ENCODE measurements at regions of chr9 and their contacts with region 1.

Region 1: GRCh38 chr9:35193762-35194161 is 32.0 kb downstream of the UNC13B start:
- DNase-seq: peak in 2 of 4 experiments; percentile 7 to 29
- ATAC-seq: no peak
- H3K4me3 ChIP-seq: no peak overlapping the region
- H3K27ac ChIP-seq: peak overlapping the region; percentile 48; the same call in 1 of the 3 replicates
- H3K4me1 ChIP-seq: peaks cover 0 to 3% of the 10 kb centered on the region in 2 experiments; a peak in 1 of 5 replicates
- H3K27me3 ChIP-seq: no peaks in the 10 kb centered on the region
- CTCF ChIP-seq: peak; percentile 11 to 50 (median 22); a peak in 3 of 6 replicates
- EP300 ChIP-seq: no peak
- POLR2A ChIP-seq: no peak
- RAD21 ChIP-seq: peak in 1 of 2 experiments; percentile 57; a peak in 2 of 4 replicates

Region 2: DNA sequence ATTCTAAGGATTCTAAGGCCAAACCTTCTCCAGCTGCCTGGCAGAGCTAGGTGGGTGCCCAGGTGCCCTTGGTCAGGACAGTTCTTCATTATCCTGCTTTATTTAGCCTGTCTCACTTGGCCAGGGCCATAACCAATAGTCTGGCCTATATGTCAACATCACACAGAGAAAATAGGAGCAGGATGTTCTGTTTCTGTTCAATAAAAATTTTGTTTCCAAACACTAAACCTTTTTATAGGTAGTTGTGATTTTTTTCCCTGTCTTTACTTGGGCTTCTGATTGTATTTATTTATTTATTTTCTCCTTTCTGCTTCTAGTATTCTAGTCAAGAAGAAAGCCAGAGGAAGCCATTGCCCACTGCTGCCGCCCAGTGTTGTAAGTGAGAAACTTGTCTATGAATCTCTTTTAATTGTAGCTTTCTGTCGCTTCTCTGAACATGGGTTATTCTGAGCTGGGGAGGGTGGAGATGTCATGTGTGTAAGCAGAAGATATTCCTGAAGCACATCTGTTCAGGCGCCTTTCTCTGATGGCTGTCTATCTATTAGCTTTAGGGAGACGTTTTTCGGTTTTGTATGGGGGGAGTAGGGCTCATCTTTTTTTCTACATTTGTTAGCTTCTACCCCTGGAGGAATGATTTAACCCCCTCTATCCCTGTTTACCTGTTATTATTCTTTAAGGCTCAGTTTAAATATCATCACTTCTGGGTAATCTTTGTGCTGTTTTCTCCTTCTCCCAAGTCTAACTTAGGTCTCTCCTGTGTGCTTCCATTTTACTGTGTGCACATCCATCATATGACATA is 65.1 kb after region 1 on chr9:
- CTCF ChIA-PET with region 1: interaction called, 3 read pairs
- POLR2A ChIA-PET with region 1: interaction called, 3 read pairs
- in situ Hi-C with region 1: no loop called
- intact Hi-C with region 1: loop called (anchors 5 kb)
- DNase-seq: peak in 2 of 4 experiments; percentile 19 to 64
- ATAC-seq: peak; percentile 76
- H3K4me3 ChIP-seq: no peak overlapping the region
- H3K27ac ChIP-seq: no peak overlapping the region
- H3K4me1 ChIP-seq: no peaks in the 10 kb centered on the region
- H3K27me3 ChIP-seq: no peaks in the 10 kb centered on the region
- CTCF ChIP-seq: peak; percentile 58 to 71 (median 61); a peak in 4 of 6 replicates
- EP300 ChIP-seq: no peak
- POLR2A ChIP-seq: no peak
- RAD21 ChIP-seq: peak; percentile 55 to 75